Transverse colon (tissue), 4 donors: ENCODE measurements at regions of chrX and their contacts with region 1.

Region 1: GRCh38 chrX:72018277-72019112 is 107.8 kb downstream of the NHSL2 start:
- DNase-seq: peak; percentile 84
- H3K4me3 ChIP-seq: peak overlapping the region in 1 of 4 donors; percentile 31
- H3K27ac ChIP-seq: peak overlapping the region; percentile 52 to 73 (median 68)
- H3K4me1 ChIP-seq: peaks cover 0 to 9% (median 2%) of the 10 kb centered on the region in 4 donors
- H3K27me3 ChIP-seq: no peaks in the 10 kb centered on the region
- CTCF ChIP-seq: peak in 4 of 5 experiments; percentile 46 to 78 (median 60)
- EP300 ChIP-seq: no peak
- POLR2A ChIP-seq: no peak

Region 2: DNA sequence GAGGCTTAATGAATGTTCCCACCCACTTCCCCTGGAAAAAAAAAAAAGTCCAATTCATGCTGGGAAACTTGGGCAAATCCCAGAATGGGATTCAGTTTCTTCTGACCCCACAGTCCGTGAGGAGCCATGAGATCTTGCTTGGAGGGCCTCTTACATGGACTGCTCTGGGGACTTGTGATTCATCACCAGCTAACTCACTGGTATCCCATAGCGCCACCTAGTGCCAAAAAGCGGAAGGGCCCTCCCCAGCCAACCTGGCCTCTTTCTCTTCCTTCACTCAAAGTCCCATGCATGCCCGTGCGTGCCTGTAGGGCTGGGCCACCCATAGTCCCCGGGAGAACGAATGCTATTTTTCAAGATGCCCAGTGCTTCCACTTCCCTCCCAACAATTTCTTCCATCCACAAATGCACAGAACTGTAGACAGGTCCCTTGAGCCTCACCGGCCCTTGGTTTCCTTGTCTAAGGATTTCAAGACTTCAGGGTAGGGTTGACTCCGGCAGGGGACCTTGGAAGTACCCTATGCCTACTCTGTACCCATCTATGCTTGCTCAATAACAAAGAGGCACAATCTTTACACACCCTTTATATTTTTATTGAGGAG is 108.1 kb after region 1 on chrX:
- in situ Hi-C with region 1: loop called in 2 of 4 experiments (anchors 10 to 25 kb)
- intact Hi-C with region 1: loop called (anchors 2 kb)
- DNase-seq: peak; percentile 87
- H3K4me3 ChIP-seq: no peak overlapping the region
- H3K27ac ChIP-seq: peak overlapping the region; percentile 35 to 63 (median 52)
- H3K4me1 ChIP-seq: peaks cover 3 to 24% (median 4%) of the 10 kb centered on the region in 4 donors
- H3K27me3 ChIP-seq: peaks cover 10% of the 10 kb centered on the region
- CTCF ChIP-seq: peak; percentile 71 to 78 (median 73)
- EP300 ChIP-seq: no peak
- POLR2A ChIP-seq: no peak